Aorta (tissue), 5 donors: ENCODE measurements at regions of chr7 and their contacts with region 1.

Region 1: GRCh38 chr7:18352339-18353255 is 143.0 kb upstream of the HDAC9 start:
- DNase-seq: peak in 1 of 2 donors; percentile 57
- ATAC-seq: no peak
- H3K4me3 ChIP-seq: no peak overlapping the region
- H3K27ac ChIP-seq: peak overlapping the region in 1 of 2 donors; percentile 43
- H3K4me1 ChIP-seq: no peaks in the 10 kb centered on the region
- H3K27me3 ChIP-seq: no peaks in the 10 kb centered on the region

Region 2: GRCh38 chr7:18370633-18371032 is 18.0 kb after region 1 on chr7:
- intact Hi-C with region 1: no loop called
- DNase-seq: no peak
- ATAC-seq: no peak
- H3K4me3 ChIP-seq: no peak overlapping the region
- H3K27ac ChIP-seq: no peak overlapping the region
- H3K4me1 ChIP-seq: no peaks in the 10 kb centered on the region
- H3K27me3 ChIP-seq: no peaks in the 10 kb centered on the region

Region 3: GRCh38 chr7:18495412-18496340 is 143.1 kb after region 1 on chr7 and contains the start of gene HDAC9:
- intact Hi-C with region 1: loop called in 1 of 2 experiments (anchors 5 kb)
- DNase-seq: peak; percentile 44 to 70
- ATAC-seq: peak; percentile 75
- H3K4me3 ChIP-seq: peak within 1 kb of the TSS; percentile 64 to 89
- H3K27ac ChIP-seq: peak within 1 kb of the TSS; percentile 83 to 100
- H3K4me1 ChIP-seq: peaks cover 0 to 16% of the 10 kb centered on the region in 2 donors
- H3K27me3 ChIP-seq: no peaks in the 10 kb centered on the region
- total RNA-seq, gene HDAC9: 51.4 to 122 TPM

Region 4: DNA sequence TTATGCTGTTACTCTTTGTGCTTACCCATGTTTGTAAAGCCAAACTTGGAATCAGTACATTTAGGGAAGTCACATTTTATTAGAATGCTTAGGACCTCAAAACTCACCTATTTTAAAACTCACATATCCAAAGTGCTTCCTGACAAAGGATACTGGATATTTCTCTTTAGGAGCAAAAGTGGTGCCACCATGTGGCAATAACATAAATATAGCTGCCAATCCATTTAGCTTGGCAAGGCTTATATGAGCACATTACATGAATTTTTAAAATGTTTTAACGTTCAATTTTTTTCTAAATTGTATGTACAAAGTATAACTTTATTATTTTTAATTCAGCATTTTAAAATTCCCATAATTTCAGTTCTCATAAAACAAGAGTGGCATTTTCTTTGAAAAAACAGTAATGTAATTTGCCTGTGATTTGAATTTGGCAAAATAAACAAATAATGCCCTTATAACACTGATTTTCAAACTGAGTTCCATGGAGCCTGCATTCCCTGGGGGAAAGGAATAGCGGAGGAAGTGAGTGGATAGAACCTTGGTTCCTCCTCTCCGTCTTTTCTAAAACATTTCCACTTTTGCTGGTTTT is 218.4 kb after region 1 on chr7:
- intact Hi-C with region 1: loop called (anchors 5 kb)
- DNase-seq: no peak
- ATAC-seq: no peak
- H3K4me3 ChIP-seq: peak overlapping the region in 1 of 2 donors; percentile 90
- H3K27ac ChIP-seq: no peak overlapping the region
- H3K4me1 ChIP-seq: peaks cover 0 to 5% of the 10 kb centered on the region in 2 donors
- H3K27me3 ChIP-seq: no peaks in the 10 kb centered on the region

Region 5: DNA sequence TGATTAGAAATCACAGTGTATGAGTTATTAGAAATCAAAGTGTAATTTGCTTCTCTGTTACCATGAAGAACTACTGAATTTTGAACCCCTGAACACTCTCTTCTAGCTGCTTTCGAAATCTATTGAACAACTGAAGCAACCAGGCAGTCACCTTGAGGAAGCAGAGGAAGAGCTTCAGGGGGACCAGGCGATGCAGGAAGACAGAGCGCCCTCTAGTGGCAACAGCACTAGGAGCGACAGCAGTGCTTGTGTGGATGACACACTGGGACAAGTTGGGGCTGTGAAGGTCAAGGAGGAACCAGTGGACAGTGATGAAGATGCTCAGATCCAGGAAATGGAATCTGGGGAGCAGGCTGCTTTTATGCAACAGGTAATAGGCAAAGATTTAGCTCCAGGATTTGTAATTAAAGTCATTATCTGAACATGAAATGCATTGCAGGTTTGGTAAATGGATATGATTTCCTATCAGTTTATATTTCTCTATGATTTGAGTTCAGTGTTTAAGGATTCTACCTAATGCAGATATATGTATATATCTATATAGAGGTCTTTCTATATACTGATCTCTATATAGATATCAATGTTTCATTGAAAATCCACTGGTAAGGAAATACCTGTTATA is 313.6 kb after region 1 on chr7:
- intact Hi-C with region 1: loop called (anchors 2 to 5 kb)
- DNase-seq: peak; percentile 87 to 91
- ATAC-seq: peak; percentile 88
- H3K4me3 ChIP-seq: no peak overlapping the region
- H3K27ac ChIP-seq: no peak overlapping the region
- H3K4me1 ChIP-seq: peaks cover 0 to 3% of the 10 kb centered on the region in 2 donors
- H3K27me3 ChIP-seq: no peaks in the 10 kb centered on the region

Region 6: GRCh38 chr7:19117091-19117869 is 764.7 kb after region 1 on chr7 and contains the start of gene TWIST1:
- intact Hi-C with region 1: loop called in 1 of 2 experiments (anchors 5 kb)
- DNase-seq: peak; percentile 79 to 90
- ATAC-seq: peak; percentile 84
- H3K4me3 ChIP-seq: peak within 1 kb of the TSS; percentile 68 to 90
- H3K27ac ChIP-seq: peak within 1 kb of the TSS; percentile 2 to 61
- H3K4me1 ChIP-seq: no peaks in the 10 kb centered on the region
- H3K27me3 ChIP-seq: no peaks in the 10 kb centered on the region
- total RNA-seq, gene TWIST1: 8.5 to 12.3 TPM

Region 7: DNA sequence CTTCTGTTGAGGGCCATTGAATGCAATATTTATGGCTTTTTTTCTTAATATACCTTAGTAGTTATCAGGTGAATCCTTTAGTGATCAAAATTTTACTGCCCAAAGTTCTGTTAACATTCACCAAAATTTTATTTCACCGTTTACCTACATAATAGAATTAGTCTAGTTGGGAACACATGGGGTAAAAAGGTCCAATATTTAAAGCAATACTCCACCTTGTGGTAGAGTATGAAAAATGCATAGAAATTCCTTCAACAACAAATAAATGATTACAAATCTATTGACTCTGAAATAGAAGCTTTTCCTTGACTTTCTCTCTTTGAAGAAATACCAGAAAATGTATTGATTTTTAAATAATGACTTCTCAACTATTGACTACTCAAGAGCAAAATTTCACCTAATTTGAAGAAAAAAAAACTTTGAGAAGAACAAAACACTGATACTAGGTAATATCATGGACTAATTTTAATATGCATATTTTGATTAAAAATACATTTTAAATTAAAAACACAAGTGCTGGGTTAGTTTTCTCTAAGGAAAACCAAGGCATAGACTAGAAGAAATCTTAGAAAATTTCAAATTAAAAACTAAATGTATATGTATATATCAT is 1312.9 kb after region 1 on chr7:
- intact Hi-C with region 1: loop called (anchors 10 kb)
- DNase-seq: no peak
- ATAC-seq: no peak
- H3K4me3 ChIP-seq: no peak overlapping the region
- H3K27ac ChIP-seq: no peak overlapping the region
- H3K4me1 ChIP-seq: no peaks in the 10 kb centered on the region
- H3K27me3 ChIP-seq: no peaks in the 10 kb centered on the region